ENCODE measurements at regions of chr6 and their contacts with region 1.

Region 1: DNA sequence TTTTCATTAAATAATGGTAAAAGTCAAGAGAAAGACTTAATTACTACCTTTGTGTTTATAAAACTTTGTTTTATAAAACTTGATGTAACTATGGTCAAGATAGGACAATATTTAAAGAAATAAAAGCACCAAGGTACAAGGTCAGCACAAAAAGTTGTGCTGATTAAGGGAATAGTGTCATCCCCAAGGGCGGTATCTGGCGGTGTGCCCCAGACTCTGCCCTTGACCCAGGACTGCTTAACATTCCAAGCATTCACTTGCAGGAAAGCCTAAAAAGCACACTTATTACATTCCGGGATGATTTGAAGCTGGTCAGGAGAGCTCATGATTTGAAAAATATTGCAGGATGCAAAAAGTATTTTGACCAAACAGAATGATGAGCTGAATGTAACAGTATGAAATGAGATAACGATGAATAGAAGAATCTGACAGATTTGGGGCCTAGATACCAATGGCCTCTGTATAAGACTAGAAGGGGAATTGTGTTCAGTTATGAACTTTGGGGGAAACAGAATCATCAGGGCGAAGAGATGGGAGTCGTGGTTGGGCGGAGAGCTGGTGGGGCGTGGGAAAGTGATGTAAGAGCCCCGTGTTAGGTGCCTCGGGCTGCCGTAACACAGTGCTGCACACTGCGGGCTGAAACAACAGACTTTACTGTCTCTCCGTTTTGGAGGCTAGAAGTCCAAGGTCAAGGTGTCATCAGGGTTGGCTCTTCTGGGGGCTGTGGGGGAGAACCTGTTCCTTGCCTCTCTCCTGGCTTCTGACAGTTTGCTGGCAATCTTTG is 77.2 kb downstream of the CDC5L start:
- DNase-seq: no peak
- H3K4me3 ChIP-seq: no peak overlapping the region
- H3K27ac ChIP-seq: no peak overlapping the region
- H3K27me3 ChIP-seq: no peaks in the 10 kb centered on the region
- CTCF ChIP-seq: no peak

Region 2: DNA sequence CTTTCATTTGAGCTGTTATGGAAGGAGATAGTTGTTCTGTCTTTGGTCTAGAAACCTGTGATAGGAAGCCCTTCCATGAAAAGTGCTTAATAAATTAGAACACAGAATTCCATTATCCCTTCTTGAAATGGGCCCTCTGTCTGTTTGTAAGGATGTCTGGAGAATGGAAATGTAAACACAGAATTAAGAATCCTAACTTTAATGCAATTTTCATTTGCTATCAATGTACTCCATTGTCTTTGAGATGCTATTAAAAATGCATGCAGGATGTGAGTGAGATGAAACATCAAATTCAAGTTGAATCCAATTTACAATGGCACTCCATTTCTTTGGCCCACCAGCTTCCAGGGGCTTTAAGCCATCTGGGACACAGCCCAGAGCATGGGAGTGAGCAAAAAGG is 137.6 kb before region 1 on chr6:
- CTCF ChIA-PET with region 1: no interaction called
- POLR2A ChIA-PET with region 1: no interaction called
- DNase-seq: no peak
- H3K4me3 ChIP-seq: no peak overlapping the region
- H3K27ac ChIP-seq: no peak overlapping the region
- H3K27me3 ChIP-seq: peaks cover 32% of the 10 kb centered on the region
- CTCF ChIP-seq: no peak

Region 3: DNA sequence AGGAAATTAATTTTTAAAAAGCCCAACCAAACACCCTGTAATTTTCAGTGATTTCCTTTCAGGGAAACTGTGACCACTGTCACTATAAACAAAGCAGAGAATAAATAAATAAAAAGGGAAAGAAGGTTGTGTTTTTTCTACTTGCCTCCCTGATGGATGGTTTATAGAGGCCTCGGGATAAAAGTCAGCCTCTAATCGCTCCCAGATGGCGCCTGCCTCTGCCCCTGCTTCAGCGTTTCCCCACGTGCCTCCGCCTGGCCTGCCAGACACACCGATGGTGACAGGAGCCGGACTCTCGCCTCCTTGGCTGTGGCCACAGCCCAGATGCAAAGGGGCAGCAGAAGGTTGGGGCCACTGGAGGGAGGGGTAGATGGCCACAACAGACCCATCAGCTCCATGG is 250.5 kb after region 1 on chr6:
- CTCF ChIA-PET with region 1: no interaction called
- POLR2A ChIA-PET with region 1: no interaction called
- DNase-seq: no peak
- H3K4me3 ChIP-seq: no peak overlapping the region
- H3K27ac ChIP-seq: no peak overlapping the region
- H3K27me3 ChIP-seq: peaks cover 18% of the 10 kb centered on the region
- CTCF ChIP-seq: no peak

Region 4: DNA sequence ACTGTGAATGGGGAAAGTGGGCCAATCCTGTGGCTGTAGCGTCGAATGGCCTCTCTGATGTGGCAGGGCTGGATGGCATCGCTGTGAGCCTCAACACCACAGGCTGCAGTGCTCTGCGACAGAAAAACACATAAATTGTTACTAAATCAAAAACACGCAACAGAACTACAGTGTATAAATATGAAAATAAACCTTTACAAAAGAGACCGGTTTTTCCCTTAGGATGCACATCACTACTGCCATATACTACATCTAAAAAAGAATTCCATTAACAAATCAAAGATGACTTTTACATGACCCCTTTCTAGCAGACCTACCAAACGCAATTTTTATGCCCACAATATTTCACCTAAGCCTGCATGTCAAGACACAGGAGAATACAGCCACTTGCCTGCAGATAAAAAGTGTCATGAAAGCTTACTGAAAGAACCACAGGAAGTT is 468.0 kb after region 1 on chr6:
- CTCF ChIA-PET with region 1: no interaction called
- POLR2A ChIA-PET with region 1: interaction called, 12 read pairs
- DNase-seq: no peak
- H3K4me3 ChIP-seq: no peak overlapping the region
- H3K27ac ChIP-seq: no peak overlapping the region
- H3K27me3 ChIP-seq: no peaks in the 10 kb centered on the region
- CTCF ChIP-seq: no peak